Dendritic cell treated with granulocyte-macrophage colony-stimulating factor and Interleukin-4, amounts not matched to agents 40 ng/mL and 50 ng/mL, for 4 days (primary cell): ENCODE measurements at regions of chr12 and their contacts with region 1.

Region 1: DNA sequence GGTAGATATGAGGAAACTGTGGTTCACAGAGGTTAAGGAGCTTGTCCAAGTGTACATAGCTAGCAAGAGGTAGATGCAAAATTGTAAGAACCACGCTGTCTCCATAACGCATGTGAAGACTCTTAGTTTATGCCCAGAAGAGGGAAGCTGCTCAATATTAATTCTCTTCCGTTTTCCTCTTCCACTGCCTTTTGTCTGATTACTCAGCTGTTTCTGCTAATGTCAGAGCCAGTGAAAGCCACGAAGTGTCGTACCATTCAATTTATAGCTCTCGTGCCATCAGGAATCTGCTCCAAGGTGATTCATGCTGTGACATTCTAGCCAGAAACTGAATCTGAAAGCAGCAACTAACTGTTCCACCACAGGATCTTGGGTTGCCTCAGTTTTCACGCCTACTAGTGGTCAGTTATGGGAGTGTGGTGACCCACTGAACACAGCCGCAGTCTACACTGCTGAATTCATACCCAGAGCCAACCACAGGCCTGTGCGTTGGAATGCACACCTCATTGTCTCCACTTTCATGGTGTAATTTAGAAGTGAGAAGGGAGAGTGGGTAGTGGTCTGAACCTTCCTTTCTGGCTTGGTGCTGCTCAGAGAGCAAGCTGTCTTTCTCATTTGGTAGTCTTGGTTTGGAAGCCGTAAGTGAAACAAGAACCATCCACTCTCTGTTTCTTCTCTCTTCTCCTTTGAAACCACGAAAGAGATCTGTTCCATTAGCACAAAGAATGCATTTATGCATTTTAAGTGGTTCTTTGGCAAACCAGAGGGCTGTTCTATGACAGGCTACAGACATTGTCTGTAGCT is 74.2 kb upstream of the NAP1L1 start:
- H3K4me3 Mint-ChIP-seq: peak overlapping the region; percentile 52
- H3K27ac Mint-ChIP-seq: peak overlapping the region; percentile 84
- H3K4me1 Mint-ChIP-seq: peaks cover 47% of the 10 kb centered on the region
- H3K27me3 Mint-ChIP-seq: no peaks in the 10 kb centered on the region

Region 2: DNA sequence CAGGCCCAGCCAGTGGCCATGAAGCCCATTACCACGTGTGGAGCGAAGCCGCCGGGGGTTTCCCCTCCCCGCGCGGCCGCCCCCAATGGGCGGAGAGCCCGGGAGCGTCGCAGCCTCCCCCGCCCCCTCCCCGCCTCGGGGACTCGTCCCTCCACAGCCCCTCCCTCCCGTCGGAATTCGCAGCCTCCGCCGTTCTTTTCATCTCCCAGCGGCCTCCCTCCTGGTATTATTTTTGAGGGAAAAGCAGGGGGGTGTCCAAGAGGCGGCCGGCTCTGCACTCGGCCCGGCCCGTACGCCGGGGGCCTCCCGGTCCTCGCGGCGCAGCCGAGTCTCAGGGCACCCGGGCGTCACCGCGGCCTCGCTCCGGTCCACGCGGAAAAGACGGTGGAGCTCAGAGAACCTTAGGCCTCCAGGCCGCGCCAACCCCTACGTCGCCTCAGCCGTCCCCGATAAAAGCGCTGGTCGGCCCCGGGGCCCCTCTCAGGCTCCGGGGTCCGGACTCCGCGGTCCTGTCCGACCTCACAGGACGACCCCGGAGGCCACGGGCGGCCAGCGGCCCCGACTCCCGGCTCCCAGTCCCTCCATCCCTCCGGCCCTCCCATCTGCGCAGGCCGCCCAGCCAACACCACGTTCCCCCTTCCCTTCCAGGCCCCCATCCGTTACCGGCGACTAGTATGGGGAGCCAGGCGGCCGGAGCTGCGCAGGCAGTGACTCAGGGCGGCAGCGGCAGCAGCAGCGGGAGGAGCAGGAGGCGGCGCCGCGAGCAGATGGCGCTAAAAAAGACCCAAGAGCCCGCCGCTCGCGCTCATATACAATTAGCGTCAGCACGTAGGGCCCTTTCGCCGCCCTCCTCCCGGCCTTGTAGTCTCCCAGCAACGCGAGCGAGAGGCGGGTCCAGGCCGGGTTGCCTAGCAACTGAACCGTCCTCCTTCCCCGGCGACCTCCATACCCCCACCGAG is 74.5 kb before region 1 on chr12 and contains the start of gene NAP1L1:
- intact Hi-C with region 1: loop called (anchors 2 kb)
- H3K4me3 Mint-ChIP-seq: peak within 1 kb of the TSS; percentile 92
- H3K27ac Mint-ChIP-seq: peak within 1 kb of the TSS; percentile 99
- H3K4me1 Mint-ChIP-seq: peaks cover 35% of the 10 kb centered on the region
- H3K27me3 Mint-ChIP-seq: no peaks in the 10 kb centered on the region

Region 3: GRCh38 chr12:76176940-76177339 is 18.2 kb after region 1 on chr12:
- intact Hi-C with region 1: loop called (anchors 2 kb)
- H3K4me3 Mint-ChIP-seq: no peak overlapping the region
- H3K27ac Mint-ChIP-seq: no peak overlapping the region
- H3K4me1 Mint-ChIP-seq: peaks cover 29% of the 10 kb centered on the region
- H3K27me3 Mint-ChIP-seq: peaks cover 10% of the 10 kb centered on the region

Region 4: DNA sequence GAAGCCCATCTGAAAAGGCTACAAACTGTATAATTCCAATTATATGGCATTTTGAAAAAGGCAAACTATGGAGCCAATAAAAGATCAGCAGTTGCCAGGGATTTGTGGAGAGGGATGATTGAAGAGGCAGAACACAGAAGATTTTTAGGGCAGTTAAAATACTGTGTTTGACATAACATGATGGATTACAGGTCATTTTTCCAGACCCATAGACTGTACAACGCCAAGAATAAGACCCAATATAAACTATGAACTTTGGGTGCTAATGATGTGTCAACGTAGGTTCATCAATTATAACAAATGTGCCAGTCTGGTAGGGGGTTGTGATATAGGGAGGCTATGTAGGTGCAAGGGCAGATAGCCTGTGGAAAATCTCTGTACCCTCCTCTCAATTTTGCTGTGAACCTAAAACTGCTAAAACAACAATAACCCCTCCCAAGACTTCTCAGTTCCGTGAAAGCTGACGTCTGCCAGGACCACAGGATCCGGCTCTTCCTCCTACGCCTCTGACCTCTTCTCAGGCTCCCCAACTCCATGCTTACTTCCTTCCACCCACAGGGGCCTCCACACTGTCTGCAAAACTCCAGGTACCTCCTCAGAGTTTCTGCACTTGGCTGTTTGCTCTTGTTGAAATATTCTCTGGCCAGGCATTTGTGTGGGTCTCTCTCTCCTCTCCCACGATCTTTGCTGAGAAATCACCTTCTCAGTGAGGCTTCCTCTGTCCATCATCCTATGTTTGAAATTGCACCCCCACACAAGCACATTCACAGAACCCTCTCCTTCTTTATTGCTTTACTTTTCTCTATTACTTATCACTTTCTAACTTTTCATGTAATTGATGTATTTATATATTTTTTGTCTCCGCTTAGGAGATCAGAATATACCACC is 58.1 kb after region 1 on chr12:
- intact Hi-C with region 1: loop called (anchors 10 kb)
- H3K4me3 Mint-ChIP-seq: no peak overlapping the region
- H3K27ac Mint-ChIP-seq: no peak overlapping the region
- H3K4me1 Mint-ChIP-seq: peaks cover 19% of the 10 kb centered on the region
- H3K27me3 Mint-ChIP-seq: peaks cover 6% of the 10 kb centered on the region